Activated naive CD4-positive, alpha-beta T cell treated with anti-CD3 and anti-CD28 coated beads for 36 hours (primary cell): ENCODE measurements at regions of chr3 and their contacts with region 1.

Region 1: DNA sequence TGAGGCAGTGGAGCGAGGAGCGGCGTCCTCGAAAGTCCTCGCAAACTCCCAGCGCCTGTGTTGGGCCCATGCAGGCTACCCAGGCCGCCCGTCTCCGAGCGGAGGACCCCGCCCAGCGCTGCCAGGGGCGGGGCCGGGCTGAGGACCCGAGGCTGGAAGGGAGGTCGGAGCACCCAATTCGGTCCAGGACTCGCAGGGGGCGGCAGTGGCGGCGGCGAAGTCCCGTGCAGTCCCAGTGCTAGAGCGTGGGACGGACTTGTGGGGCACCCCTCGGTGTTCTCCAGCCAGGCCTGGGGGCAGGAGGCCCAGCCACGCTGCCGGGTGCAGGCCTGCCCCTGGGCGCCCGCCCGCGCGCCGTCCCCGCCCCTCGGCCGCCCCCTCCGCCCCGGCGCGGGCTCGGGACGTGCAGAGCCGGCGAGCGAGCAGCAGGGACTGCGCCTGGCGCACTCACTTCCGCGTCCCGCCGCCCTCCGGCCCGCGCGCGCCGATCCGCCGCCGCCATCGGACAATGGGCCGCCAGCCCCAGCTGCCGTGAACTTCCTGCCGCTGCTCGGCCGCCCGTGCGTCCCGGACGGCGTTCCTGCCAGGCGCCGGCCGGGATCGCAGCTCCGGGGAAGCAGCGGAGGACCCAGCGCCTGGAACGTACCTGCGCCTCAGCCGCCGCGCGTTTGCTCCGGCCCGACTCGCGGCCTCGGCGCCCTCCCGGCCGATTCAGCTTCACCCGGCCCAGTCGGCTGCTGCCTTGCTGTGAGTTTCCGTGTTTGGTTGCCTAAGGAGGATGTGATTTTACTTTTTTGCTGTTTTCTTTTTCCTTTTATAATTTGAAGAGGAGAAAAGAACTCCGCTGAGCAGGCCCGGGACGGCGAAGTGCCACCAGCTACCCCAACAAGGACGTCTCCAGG is 592 bp upstream of the LIMD1 start:
- DNase-seq: peak; percentile 61
- H3K4me3 Mint-ChIP-seq: peak overlapping the region; percentile 80
- H3K27ac Mint-ChIP-seq: peak overlapping the region; percentile 84
- H3K4me1 Mint-ChIP-seq: peaks cover 48% of the 10 kb centered on the region
- H3K27me3 Mint-ChIP-seq: no peaks in the 10 kb centered on the region

Region 2: DNA sequence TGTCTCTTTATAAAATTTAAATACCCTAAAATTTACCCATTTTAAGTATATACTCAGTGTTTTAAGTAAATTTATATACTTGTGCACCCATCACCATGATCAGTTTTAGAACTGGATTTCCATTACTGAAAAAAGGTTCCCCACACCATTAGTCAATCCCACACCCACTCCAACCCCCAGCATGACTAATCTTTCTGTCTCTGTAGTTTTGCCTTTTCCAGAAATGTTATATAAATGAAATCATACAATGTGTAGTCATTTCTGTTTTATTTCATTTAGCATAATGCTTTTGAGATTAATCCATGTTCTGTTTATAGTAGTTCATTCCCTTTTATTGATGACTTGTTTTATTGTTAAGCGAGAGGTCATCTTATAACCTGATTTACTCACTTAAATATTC is 65.5 kb before region 1 on chr3:
- CTCF ChIA-PET with region 1: no interaction called
- intact Hi-C with region 1: loop called (anchors 2 kb)
- DNase-seq: peak; percentile 67
- H3K4me3 Mint-ChIP-seq: no peak overlapping the region
- H3K27ac Mint-ChIP-seq: no peak overlapping the region
- H3K4me1 Mint-ChIP-seq: peaks cover 15% of the 10 kb centered on the region
- H3K27me3 Mint-ChIP-seq: no peaks in the 10 kb centered on the region